ENCODE measurements at regions of chr2 and their contacts with region 1.

Region 1: GRCh38 chr2:20446917-20447436 is at the start of gene RHOB:
- DNase-seq: peak; percentile 97 to 98
- H3K4me3 ChIP-seq: peak within 1 kb of the TSS; percentile 80
- H3K4me3 Mint-ChIP-seq: peak within 1 kb of the TSS; percentile 87
- H3K27ac Mint-ChIP-seq: peak within 1 kb of the TSS; percentile 84
- H3K4me1 ChIP-seq: peaks cover 26% of the 10 kb centered on the region
- H3K4me1 Mint-ChIP-seq: peaks cover 8% of the 10 kb centered on the region
- H3K27me3 ChIP-seq: no peaks in the 10 kb centered on the region
- H3K27me3 Mint-ChIP-seq: no peaks in the 10 kb centered on the region
- CTCF ChIP-seq: no peak
- total RNA-seq, gene RHOB: 20.8 and 24.1 TPM in 2 replicates

Region 2: DNA sequence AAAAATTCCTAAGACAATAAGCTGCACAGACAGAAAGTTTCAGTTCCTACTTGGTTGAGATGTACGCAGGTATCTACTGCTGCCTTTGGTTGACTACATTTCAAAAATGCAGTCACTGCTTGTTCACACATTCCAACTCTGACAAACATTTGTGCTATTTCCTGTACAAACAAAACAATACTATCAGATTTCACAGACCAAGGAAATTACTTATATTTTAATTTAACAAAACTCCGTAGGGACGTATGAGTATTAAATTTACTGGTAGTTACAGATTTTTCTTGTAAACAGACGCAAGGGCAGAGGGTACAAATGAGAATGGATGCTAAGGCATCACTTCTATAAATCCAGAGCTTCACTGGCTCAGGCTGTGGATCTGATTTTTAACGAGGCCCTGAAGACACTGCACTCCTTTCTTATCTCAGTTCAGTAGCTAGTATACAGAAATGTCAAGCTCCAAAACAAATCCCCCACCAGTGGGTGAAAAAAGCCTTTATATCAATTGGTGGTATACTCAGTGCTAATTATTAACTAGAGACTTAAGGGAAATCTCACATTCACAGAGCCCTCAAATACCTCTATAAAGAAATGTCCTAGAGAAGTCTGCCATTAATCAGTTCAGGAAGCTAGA is 513.5 kb before region 1 on chr2:
- CTCF ChIA-PET with region 1: no interaction called
- POLR2A ChIA-PET with region 1: no interaction called
- intact Hi-C with region 1: no loop called
- DNase-seq: peak in 1 of 2 experiments; percentile 45
- H3K4me3 ChIP-seq: no peak overlapping the region
- H3K4me3 Mint-ChIP-seq: peak overlapping the region; percentile 43
- H3K27ac Mint-ChIP-seq: peak overlapping the region; percentile 48
- H3K4me1 ChIP-seq: peaks cover 6% of the 10 kb centered on the region; the same call in 1 of the 2 replicates
- H3K4me1 Mint-ChIP-seq: peaks cover 12% of the 10 kb centered on the region
- H3K27me3 ChIP-seq: no peaks in the 10 kb centered on the region
- H3K27me3 Mint-ChIP-seq: no peaks in the 10 kb centered on the region
- CTCF ChIP-seq: no peak

Region 3: GRCh38 chr2:20350753-20351554 is 96.0 kb before region 1 on chr2 and contains the start of gene PUM2:
- CTCF ChIA-PET with region 1: interaction called, 3 read pairs
- POLR2A ChIA-PET with region 1: interaction called, 12 read pairs
- intact Hi-C with region 1: no loop called
- DNase-seq: peak; percentile 97 to 98
- H3K4me3 ChIP-seq: peak within 1 kb of the TSS; percentile 95
- H3K4me3 Mint-ChIP-seq: no peak within 1 kb of the TSS
- H3K27ac Mint-ChIP-seq: peak within 1 kb of the TSS; percentile 90
- H3K4me1 ChIP-seq: peaks cover 48% of the 10 kb centered on the region
- H3K4me1 Mint-ChIP-seq: peaks cover 12% of the 10 kb centered on the region
- H3K27me3 ChIP-seq: no peaks in the 10 kb centered on the region
- H3K27me3 Mint-ChIP-seq: no peaks in the 10 kb centered on the region
- CTCF ChIP-seq: no peak
- total RNA-seq, gene PUM2: 117 and 119 TPM in 2 replicates

Region 4: DNA sequence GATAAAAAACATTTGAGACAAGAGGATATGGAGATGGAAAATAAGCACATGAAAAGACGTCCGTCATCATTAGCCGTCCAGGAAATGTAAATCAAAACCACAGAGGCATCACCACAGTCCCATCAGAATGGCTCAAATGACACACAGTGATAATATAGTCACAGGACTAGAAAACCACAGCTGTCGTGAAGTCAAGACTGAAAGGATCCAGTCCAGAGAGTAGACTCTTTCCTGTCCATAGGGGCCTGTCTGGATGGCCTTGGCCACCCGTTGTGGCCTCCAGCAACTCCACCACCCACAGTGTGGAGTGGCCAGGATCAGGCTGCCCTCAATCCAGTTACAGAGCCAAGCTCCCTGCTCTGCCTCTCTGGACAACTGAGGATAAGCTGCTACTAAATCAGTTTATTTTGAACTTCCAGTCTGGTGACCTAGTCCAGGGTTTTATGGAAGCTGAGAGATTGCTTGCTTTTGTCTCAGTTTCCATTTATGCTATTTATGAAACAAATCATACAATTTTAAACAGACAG is 60.3 kb after region 1 on chr2:
- CTCF ChIA-PET with region 1: no interaction called
- POLR2A ChIA-PET with region 1: interaction called, 7 read pairs
- intact Hi-C with region 1: loop called (anchors 2 kb)
- DNase-seq: no peak
- H3K4me3 ChIP-seq: no peak overlapping the region
- H3K4me3 Mint-ChIP-seq: no peak overlapping the region
- H3K27ac Mint-ChIP-seq: no peak overlapping the region
- H3K4me1 ChIP-seq: no peaks in the 10 kb centered on the region; the same call in 1 of the 2 replicates
- H3K4me1 Mint-ChIP-seq: peaks cover 17% of the 10 kb centered on the region
- H3K27me3 ChIP-seq: no peaks in the 10 kb centered on the region
- H3K27me3 Mint-ChIP-seq: no peaks in the 10 kb centered on the region
- CTCF ChIP-seq: no peak

Region 5: DNA sequence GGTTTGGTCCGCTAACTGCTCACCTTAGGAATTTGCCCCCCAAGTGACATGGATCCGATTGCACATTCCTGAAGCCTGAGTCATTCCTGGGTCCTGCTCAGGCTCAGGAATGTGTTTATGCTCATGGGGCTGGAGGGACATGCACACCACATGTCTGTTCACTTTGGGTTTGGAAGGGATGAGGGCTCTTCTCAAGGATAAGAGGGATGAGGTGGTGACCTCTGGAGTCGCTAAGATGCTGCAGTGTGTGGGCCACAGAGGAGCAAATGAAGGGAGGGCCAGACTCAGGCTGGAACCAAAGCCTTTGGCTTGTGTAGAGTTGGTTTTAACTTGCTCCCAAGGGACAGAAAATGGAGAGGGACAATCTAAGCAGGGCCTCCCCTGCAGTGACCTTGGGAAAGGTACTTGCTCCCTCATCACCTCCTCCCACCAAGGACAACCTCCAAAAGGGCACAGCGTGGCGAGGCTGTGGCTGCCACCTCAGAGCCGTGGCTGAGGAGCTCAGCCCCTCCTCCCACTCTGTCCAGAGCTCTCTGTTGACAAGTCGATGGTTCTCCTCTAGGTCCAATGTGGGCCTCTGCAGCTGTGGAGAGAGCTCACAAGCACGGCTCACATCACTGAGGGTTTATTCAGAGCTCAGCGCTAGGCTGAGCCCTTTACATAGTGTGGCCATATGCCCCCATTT is 137.8 kb after region 1 on chr2:
- CTCF ChIA-PET with region 1: interaction called, 3 read pairs
- POLR2A ChIA-PET with region 1: interaction called, 15 read pairs
- intact Hi-C with region 1: loop called (anchors 1 kb)
- DNase-seq: peak; percentile 85 to 92
- H3K4me3 ChIP-seq: no peak overlapping the region
- H3K4me3 Mint-ChIP-seq: peak overlapping the region; percentile 32
- H3K27ac Mint-ChIP-seq: peak overlapping the region; percentile 89
- H3K4me1 ChIP-seq: peaks cover 54% of the 10 kb centered on the region
- H3K4me1 Mint-ChIP-seq: peaks cover 43% of the 10 kb centered on the region
- H3K27me3 ChIP-seq: no peaks in the 10 kb centered on the region
- H3K27me3 Mint-ChIP-seq: no peaks in the 10 kb centered on the region
- CTCF ChIP-seq: no peak

Region 6: GRCh38 chr2:20642055-20642971 is 195.3 kb after region 1 on chr2:
- CTCF ChIA-PET with region 1: interaction called, 21 read pairs
- POLR2A ChIA-PET with region 1: interaction called, 14 read pairs
- intact Hi-C with region 1: loop called (anchors 1 kb)
- DNase-seq: peak; percentile 64 to 88
- H3K4me3 ChIP-seq: no peak overlapping the region
- H3K4me3 Mint-ChIP-seq: no peak overlapping the region
- H3K27ac Mint-ChIP-seq: no peak overlapping the region
- H3K4me1 ChIP-seq: no peaks in the 10 kb centered on the region
- H3K4me1 Mint-ChIP-seq: no peaks in the 10 kb centered on the region
- H3K27me3 ChIP-seq: no peaks in the 10 kb centered on the region
- H3K27me3 Mint-ChIP-seq: no peaks in the 10 kb centered on the region
- CTCF ChIP-seq: peak; percentile 97 to 99

Region 7: GRCh38 chr2:20822535-20823490 is 375.8 kb after region 1 on chr2 and contains the start of gene LDAH:
- CTCF ChIA-PET with region 1: no interaction called
- POLR2A ChIA-PET with region 1: interaction called, 3 read pairs
- intact Hi-C with region 1: loop called (anchors 1 kb)
- DNase-seq: peak; percentile 94 to 95
- H3K4me3 ChIP-seq: peak within 1 kb of the TSS; percentile 83
- H3K4me3 Mint-ChIP-seq: peak within 1 kb of the TSS; percentile 98
- H3K27ac Mint-ChIP-seq: peak within 1 kb of the TSS; percentile 99
- H3K4me1 ChIP-seq: peaks cover 13% of the 10 kb centered on the region
- H3K4me1 Mint-ChIP-seq: peaks cover 5% of the 10 kb centered on the region
- H3K27me3 ChIP-seq: no peaks in the 10 kb centered on the region
- H3K27me3 Mint-ChIP-seq: no peaks in the 10 kb centered on the region
- CTCF ChIP-seq: no peak
- total RNA-seq, gene LDAH: 37.2 and 40.5 TPM in 2 replicates